Natural killer cell (primary cell): ENCODE measurements at regions of chr11 and their contacts with region 1.

Region 1: GRCh38 chr11:116787786-116788486 is at the start of gene ZPR1:
- DNase-seq: peak; percentile 85 to 92
- ATAC-seq: peak; percentile 87 to 90 (median 90)
- H3K4me3 ChIP-seq: peak within 1 kb of the TSS; percentile 77
- H3K4me3 Mint-ChIP-seq: peak within 1 kb of the TSS; percentile 98
- H3K27ac ChIP-seq: peak within 1 kb of the TSS; percentile 84
- H3K27ac Mint-ChIP-seq: peak within 1 kb of the TSS; percentile 96 to 97
- H3K4me1 ChIP-seq: peaks cover 30% of the 10 kb centered on the region
- H3K4me1 Mint-ChIP-seq: peaks cover 30 to 47% of the 10 kb centered on the region in 2 donors
- H3K27me3 ChIP-seq: no peaks in the 10 kb centered on the region
- H3K27me3 Mint-ChIP-seq: no peaks in the 10 kb centered on the region
- CTCF ChIP-seq: no peak
- total RNA-seq, gene ZPR1: 92.0 to 107 (median 92.6) TPM

Region 2: DNA sequence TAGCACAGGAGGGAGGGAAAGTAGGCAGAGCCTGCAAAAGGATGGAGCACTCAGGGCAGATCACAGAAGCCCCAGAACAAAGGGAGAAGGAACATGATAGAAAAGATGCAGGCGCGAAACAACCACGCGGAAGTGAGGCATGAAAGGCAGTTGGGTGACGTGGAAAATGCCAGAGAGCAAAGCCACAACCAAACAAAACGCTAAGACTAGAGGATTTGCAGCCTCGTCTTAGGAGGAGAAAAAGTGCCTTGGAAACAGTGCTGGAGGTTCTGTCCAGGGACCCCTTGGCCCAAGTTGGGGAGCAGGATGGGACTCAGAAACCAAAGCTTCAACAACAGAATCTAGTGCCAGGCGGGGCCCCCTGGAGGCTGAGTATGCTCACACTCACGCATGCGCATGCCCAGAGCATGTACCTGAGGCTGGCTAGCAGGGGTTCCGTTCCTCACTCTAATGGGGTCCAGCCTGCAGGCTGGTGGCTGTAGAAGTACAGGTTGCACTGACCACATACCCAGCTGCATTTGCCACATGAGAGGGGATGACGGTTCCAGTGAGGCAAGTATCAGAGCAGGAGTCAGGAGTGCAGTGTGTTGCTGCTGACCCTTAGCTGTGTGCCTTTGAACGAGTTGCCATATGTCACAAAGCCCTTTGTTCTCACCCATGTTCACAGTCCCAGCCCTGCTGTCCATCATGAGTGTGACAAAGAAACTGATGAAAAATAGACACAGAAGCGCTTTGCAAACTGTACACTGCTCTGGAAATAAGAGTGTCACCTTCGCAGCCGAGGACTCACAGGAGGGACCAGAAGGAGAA is 715.1 kb before region 1 on chr11:
- intact Hi-C with region 1: no loop called
- DNase-seq: no peak
- ATAC-seq: no peak
- H3K4me3 ChIP-seq: no peak overlapping the region
- H3K4me3 Mint-ChIP-seq: no peak overlapping the region
- H3K27ac ChIP-seq: no peak overlapping the region
- H3K27ac Mint-ChIP-seq: no peak overlapping the region
- H3K4me1 ChIP-seq: no peaks in the 10 kb centered on the region
- H3K4me1 Mint-ChIP-seq: no peaks in the 10 kb centered on the region
- H3K27me3 ChIP-seq: no peaks in the 10 kb centered on the region
- H3K27me3 Mint-ChIP-seq: peaks cover 8 to 13% of the 10 kb centered on the region in 2 donors
- CTCF ChIP-seq: no peak

Region 3: DNA sequence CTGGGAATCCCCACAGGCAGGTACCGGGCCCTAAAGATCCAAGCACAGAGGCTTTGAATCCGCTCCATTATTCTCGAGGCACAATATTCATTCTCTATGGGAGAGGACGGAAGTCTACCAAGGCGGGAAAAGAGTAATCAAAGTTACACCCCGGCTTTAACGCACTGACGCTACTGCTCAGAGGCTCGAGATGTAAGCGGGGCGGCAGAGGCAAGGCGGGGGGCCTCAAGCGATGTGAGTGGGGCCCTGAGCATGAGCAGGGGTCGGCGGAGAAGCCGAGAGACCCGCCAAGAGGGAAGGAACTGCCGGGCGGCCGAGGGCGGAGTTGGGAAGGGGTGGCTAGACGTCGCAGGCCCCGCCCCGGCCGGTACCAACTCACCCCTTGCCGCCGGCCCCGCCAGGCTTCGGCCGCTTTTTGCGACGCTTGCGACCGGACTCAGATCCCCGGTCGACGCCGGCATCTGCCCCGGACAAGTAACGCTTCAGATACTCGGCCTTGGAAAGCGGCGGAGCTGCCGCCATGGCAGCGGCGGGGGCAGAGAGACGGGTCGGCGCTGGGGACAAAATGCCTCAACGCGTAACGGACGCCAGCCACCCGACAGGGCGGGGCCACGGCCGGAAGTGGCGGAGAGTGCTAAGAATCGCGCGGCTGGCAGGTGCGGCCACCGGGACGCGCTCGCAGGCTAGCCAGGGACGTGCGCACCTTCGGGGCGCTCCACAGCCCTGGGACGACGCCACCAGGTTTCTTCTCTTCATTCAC is 15.3 kb before region 1 on chr11 and contains the start of gene BUD13:
- intact Hi-C with region 1: loop called (anchors 2 kb)
- DNase-seq: peak; percentile 96
- ATAC-seq: peak; percentile 90 to 96 (median 93)
- H3K4me3 ChIP-seq: peak within 1 kb of the TSS; percentile 99
- H3K4me3 Mint-ChIP-seq: peak within 1 kb of the TSS; percentile 99
- H3K27ac ChIP-seq: peak within 1 kb of the TSS; percentile 95
- H3K27ac Mint-ChIP-seq: peak within 1 kb of the TSS; percentile 97 to 98
- H3K4me1 ChIP-seq: peaks cover 15% of the 10 kb centered on the region
- H3K4me1 Mint-ChIP-seq: peaks cover 26 to 32% of the 10 kb centered on the region in 2 donors
- H3K27me3 ChIP-seq: no peaks in the 10 kb centered on the region
- H3K27me3 Mint-ChIP-seq: no peaks in the 10 kb centered on the region
- CTCF ChIP-seq: no peak
- total RNA-seq, gene BUD13: 13.5 to 16.0 (median 13.7) TPM

Region 4: GRCh38 chr11:116835791-116836631 is 48.1 kb after region 1 on chr11:
- intact Hi-C with region 1: loop called (anchors 1 kb)
- DNase-seq: peak; percentile 75 to 91
- ATAC-seq: peak; percentile 92 to 97 (median 96)
- H3K4me3 ChIP-seq: peak overlapping the region; percentile 66
- H3K4me3 Mint-ChIP-seq: peak overlapping the region; percentile 84
- H3K27ac ChIP-seq: peak overlapping the region; percentile 52
- H3K27ac Mint-ChIP-seq: peak overlapping the region; percentile 46 to 82
- H3K4me1 ChIP-seq: peaks cover 19% of the 10 kb centered on the region
- H3K4me1 Mint-ChIP-seq: peaks cover 17 to 18% of the 10 kb centered on the region in 2 donors
- H3K27me3 ChIP-seq: no peaks in the 10 kb centered on the region
- H3K27me3 Mint-ChIP-seq: peaks cover 0 to 2% of the 10 kb centered on the region in 2 donors
- CTCF ChIP-seq: peak; percentile 63

Region 5: GRCh38 chr11:116853461-116854073 is 65.6 kb after region 1 on chr11:
- intact Hi-C with region 1: loop called (anchors 5 kb)
- DNase-seq: peak; percentile 30 to 88
- ATAC-seq: peak; percentile 91 to 96 (median 94)
- H3K4me3 ChIP-seq: no peak overlapping the region
- H3K4me3 Mint-ChIP-seq: peak overlapping the region; percentile 88
- H3K27ac ChIP-seq: peak overlapping the region; percentile 73
- H3K27ac Mint-ChIP-seq: peak overlapping the region; percentile 92 to 93
- H3K4me1 ChIP-seq: peaks cover 58% of the 10 kb centered on the region
- H3K4me1 Mint-ChIP-seq: peaks cover 65 to 69% of the 10 kb centered on the region in 2 donors
- H3K27me3 ChIP-seq: no peaks in the 10 kb centered on the region
- H3K27me3 Mint-ChIP-seq: no peaks in the 10 kb centered on the region
- CTCF ChIP-seq: no peak

Region 6: GRCh38 chr11:117107701-117108590 is 320.0 kb after region 1 on chr11:
- intact Hi-C with region 1: loop called (anchors 1 kb)
- DNase-seq: no peak
- ATAC-seq: no peak
- H3K4me3 ChIP-seq: no peak overlapping the region
- H3K4me3 Mint-ChIP-seq: no peak overlapping the region
- H3K27ac ChIP-seq: no peak overlapping the region
- H3K27ac Mint-ChIP-seq: no peak overlapping the region
- H3K4me1 ChIP-seq: no peaks in the 10 kb centered on the region
- H3K4me1 Mint-ChIP-seq: no peaks in the 10 kb centered on the region
- H3K27me3 ChIP-seq: peaks cover 2% of the 10 kb centered on the region
- H3K27me3 Mint-ChIP-seq: no peaks in the 10 kb centered on the region
- CTCF ChIP-seq: no peak

Region 7: DNA sequence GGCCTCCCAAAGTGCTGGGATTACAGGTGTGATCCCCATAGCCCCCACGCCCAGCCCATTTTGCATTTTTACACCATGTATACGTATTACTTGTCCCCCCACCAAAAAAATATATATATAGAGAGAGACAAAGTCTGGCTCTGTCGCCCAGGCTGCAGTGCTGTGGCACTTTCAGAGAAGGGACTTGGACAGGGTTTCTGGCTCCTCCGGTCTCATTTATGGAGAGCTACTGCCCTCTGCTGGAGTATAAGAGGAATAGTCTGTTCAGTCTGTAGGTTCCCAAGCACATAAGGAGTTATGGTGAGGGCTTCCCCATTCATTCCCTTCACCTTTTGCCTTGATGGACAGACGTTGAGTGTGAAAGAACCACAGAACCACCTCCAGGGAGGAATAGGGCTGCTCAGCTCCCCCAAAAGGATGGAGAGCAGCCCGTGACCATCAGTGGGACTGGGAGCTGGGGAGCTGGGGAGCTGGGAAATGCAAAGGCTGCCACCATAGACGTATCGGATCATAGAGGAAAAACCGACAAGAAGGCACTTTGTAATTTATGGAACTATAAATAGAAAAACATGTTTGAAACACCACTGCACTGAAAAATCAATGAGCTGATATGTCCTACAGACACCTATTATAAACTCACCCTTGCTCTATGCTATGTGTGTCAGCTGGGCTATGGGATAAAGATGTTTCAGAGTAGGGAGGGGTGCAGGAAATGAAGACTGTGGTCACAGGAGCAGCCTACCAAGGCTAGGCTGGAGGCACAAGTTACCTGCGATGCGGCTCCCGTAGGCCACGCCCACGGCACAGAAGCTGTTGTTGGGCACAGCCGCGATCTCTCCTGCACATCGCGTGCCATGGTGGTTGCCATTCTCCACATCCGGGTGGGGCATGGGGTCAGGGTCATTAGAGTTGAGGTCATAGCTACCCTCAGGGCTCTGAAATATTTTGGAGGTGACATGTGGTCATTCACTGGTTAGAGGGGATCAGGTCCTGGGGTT is 438.8 kb after region 1 on chr11:
- intact Hi-C with region 1: loop called (anchors 2 kb)
- DNase-seq: peak in 1 of 2 donors; percentile 88
- ATAC-seq: peak; percentile 68 to 79 (median 68)
- H3K4me3 ChIP-seq: no peak overlapping the region
- H3K4me3 Mint-ChIP-seq: peak overlapping the region; percentile 4
- H3K27ac ChIP-seq: no peak overlapping the region
- H3K27ac Mint-ChIP-seq: peak overlapping the region; percentile 64 to 75
- H3K4me1 ChIP-seq: peaks cover 33% of the 10 kb centered on the region
- H3K4me1 Mint-ChIP-seq: peaks cover 35 to 52% of the 10 kb centered on the region in 2 donors
- H3K27me3 ChIP-seq: no peaks in the 10 kb centered on the region
- H3K27me3 Mint-ChIP-seq: no peaks in the 10 kb centered on the region
- CTCF ChIP-seq: peak; percentile 73